ENCODE measurements at regions of chr15 and their contacts with region 1.

Region 1: DNA sequence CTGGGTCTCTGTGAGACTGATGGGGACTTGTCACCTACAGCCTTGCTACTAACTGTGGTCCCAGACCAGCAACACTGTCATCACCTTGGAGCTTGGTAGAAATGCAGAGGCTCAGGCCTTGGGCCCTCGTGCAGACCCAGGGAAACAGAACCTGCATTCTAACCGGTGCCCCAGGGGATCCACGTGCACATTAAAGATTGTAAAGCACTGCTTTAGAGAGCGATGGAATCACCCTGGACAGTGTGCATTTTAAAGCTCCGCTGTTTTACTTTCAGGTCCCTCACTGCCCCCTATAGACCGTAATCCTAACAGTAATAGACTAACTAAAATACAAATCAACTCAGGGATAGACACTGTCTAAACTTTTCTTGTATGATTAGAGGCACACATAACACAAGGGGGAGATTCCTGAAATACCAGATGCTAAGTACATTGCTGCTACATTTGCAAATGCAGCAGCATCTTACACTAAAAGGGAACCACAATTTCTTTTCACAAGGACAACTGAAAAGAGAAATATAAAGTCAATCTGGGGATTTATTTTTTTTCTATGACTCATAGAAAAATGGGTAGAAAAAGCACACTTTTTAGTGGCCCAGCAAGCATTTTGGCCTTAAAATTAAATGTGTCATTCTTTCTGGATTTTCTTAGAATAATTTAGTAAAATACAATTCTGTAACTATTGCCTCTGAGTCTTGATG is 10.5 kb upstream of the SH3GL3 start:
- DNase-seq: no peak

Region 2: DNA sequence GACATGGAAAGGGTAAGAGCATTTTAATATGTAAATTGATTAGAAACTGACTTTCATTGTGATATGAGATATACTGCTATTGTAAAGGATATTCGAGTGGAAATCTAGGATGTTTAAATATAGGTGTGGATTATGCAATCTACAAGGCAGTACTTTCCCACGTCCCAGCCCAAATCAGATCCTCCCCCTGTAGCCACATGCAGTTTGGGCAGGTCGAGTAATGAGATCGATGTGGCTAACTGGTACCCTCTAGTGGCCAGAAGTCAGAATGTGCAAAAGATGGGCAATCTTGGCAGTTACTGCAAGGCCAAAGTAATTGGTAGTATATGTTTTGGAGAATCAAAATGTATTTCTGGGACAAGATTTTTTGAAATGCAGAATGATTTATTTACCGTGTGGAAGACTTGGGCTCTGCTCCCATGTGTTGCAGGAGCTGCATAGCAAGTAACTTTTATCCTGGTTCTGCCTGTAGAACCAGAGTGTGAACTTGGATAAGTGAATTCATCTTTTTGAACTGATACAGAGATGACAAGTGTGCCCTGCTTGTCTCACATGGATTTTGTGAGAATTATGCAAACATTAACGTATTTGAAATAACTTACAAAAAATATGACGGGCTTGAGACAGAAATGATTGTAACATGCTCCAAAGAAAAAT is 122.8 kb after region 1 on chr15:
- intact Hi-C with region 1: loop called in 1 of 2 experiments (anchors 10 kb)
- DNase-seq: no peak

Region 3: DNA sequence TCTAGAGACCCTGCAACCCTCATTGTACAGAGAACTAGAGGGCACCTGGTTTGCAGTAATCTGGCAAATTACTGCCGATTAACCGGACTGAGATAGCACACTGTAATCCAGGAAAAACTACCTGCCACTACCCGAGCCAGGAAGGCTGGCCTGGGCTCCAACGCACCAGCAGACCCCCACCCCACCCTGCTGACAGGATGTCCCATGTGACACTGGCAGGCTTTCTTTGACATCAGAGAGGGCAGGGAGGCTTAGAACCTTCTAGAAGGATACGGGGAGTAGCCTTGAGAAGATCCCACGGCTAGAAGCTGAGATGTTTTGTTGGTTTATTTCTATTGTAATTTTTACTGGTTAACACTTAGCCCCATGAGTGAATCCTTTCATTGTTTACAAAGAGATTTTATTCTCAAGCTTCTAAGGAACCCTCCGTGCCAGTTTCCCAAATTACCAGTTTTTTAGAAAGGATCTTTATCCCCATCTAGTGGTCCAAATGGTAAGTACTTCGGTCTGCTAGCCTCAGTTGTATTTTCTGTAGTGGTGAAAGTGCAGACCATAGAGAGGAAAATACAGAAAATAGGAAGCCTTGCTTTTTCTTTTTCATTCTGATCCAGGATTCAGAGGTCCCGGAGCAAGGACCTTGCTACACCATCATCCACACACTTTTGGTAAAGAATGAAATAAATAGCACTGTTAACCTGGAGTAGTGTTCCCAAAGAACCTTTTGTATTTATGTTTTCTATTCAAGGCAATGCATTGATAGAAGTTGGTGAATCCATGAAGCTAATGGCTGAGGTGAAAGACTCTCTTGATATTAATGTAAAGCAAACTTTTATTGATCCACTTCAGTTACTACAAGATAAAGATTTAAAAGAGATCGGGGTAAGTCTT is 135.5 kb after region 1 on chr15:
- intact Hi-C with region 1: loop called in 1 of 2 experiments (anchors 10 kb)
- DNase-seq: no peak